Caco-2 (cell line): ENCODE measurements at regions of chr10 and their contacts with region 1.

Region 1: DNA sequence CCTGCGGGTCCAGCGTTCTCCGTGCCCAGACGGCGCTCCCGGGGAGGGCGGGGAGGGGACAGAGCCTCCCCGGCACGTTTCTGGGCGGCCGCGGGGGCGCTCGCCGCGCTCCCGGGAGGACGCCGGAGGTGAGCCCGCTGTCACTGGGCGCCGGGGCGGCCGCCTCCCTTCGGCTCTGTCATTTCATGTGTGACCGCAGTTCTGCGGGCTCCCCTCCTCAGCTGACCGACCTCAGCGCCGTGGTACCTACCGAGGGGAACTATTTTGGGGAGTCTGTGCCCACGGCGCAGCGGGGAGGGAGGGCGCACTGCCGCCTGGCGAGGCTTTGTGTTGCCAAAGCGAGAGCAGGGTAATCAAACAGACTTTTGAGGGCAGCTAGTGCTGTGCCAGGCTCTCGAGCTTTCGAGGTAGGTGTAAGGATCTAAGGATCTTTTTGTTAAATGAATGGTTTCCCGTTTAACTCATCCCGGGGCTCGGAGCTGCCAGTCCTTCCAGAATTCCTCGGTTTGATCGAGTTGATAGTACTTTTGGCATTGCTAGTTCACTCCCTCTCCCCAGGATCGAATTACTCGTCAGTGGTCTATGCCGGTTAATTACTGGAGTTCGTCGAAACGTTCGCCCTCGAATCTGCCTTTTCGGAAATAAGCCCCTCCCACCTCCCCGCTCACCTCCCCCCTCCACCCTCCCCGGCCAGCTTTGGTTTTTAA is 1.9 kb downstream of the ARID5B start:
- DNase-seq: peak in 1 of 2 experiments; percentile 84
- H3K4me3 ChIP-seq: peak overlapping the region; percentile 97
- H3K4me3 Mint-ChIP-seq: peak overlapping the region; percentile 89
- H3K27ac Mint-ChIP-seq: peak overlapping the region; percentile 99
- H3K4me1 ChIP-seq: peaks cover 57% of the 10 kb centered on the region
- H3K4me1 Mint-ChIP-seq: peaks cover 34% of the 10 kb centered on the region
- H3K27me3 ChIP-seq: no peaks in the 10 kb centered on the region
- H3K27me3 Mint-ChIP-seq: no peaks in the 10 kb centered on the region
- CTCF ChIP-seq: peak; percentile 14 to 16

Region 2: GRCh38 chr10:62025901-62026879 is 122.8 kb after region 1 on chr10:
- CTCF ChIA-PET with region 1: no interaction called
- POLR2A ChIA-PET with region 1: no interaction called
- intact Hi-C with region 1: loop called (anchors 1 kb)
- DNase-seq: no peak
- H3K4me3 ChIP-seq: no peak overlapping the region
- H3K4me3 Mint-ChIP-seq: no peak overlapping the region
- H3K27ac Mint-ChIP-seq: peak overlapping the region; percentile 82
- H3K4me1 ChIP-seq: peaks cover 91% of the 10 kb centered on the region
- H3K4me1 Mint-ChIP-seq: peaks cover 90% of the 10 kb centered on the region
- H3K27me3 ChIP-seq: no peaks in the 10 kb centered on the region
- H3K27me3 Mint-ChIP-seq: no peaks in the 10 kb centered on the region
- CTCF ChIP-seq: no peak

Region 3: DNA sequence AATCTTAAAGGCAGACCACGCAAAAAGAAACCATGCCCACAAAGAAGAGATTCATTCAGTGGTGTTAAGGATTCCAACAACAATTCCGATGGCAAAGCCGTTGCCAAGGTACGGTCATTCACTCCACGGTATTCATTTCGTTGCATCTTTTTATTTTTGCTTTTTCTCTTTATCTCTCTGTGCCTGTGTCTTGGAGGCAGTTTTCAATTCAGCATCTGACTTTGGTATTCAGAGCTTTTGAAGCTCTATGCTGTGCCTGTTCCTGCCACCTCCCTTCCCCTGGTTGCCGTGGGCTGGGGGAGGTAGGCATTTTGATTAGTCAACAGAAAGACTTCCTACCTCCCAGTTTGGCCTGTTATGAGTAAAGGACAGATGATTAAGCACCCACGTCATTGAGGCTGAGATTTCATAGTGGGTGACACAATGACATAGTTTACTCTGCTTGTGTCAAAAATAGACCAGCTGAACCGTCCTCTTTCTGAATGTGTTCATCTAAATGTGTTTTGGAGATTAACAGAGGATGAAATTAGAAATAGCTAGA is 147.6 kb after region 1 on chr10:
- CTCF ChIA-PET with region 1: interaction called, 6 read pairs
- POLR2A ChIA-PET with region 1: interaction called, 4 read pairs
- intact Hi-C with region 1: loop called (anchors 1 kb)
- DNase-seq: peak in 1 of 2 experiments; percentile 57
- H3K4me3 ChIP-seq: peak overlapping the region; percentile 36
- H3K4me3 Mint-ChIP-seq: peak overlapping the region; percentile 93
- H3K27ac Mint-ChIP-seq: peak overlapping the region; percentile 79
- H3K4me1 ChIP-seq: peaks cover 74% of the 10 kb centered on the region
- H3K4me1 Mint-ChIP-seq: peaks cover 82% of the 10 kb centered on the region
- H3K27me3 ChIP-seq: no peaks in the 10 kb centered on the region
- H3K27me3 Mint-ChIP-seq: no peaks in the 10 kb centered on the region
- CTCF ChIP-seq: no peak